IMR-90 (cell line): ENCODE measurements at regions of chr3 and their contacts with region 1.

Region 1: DNA sequence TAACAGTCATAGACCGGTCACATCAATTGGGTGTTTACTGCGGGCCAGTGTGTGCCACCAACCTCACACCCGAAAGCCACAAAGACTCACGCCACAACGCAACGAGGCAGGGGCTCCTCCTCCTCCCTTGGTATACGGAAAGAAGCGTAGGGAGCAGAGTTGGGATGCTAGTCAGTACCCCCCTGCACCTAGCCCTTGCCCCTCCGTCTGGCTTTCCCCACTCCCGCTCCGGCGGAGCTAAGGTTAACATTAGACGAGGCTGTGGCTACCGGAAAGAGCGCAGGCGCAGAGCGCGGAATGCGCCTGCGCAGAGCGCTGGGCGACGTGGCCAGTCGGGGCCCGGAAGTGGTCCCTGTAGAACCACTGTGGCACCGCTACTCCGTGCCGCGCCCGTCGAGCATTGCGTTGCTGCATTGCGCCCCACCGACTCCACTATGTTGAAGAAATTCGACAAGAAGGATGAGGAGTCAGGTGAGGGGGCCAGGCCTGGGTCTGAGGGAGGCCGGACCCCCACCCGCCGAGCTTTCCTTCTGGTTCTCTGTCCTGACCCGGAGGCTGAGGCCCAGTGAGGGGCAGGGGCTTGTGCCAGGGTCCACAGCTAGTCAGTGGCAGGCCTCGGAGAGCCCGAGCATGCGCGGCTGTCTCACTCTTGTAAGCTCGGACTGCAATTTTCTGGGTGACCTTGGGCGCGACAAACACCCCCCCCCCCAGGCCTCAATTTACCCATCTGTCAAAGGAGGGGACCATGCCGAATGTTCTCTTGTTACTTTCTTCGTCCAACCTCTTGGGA is at the start of gene COPG1:
- DNase-seq: peak; percentile 87
- ATAC-seq: peak; percentile 83
- H3K4me3 ChIP-seq: peak within 1 kb of the TSS; percentile 67
- H3K27ac ChIP-seq: peak within 1 kb of the TSS; percentile 96
- H3K4me1 ChIP-seq: peaks cover 16% of the 10 kb centered on the region
- H3K27me3 ChIP-seq: no peaks in the 10 kb centered on the region
- CTCF ChIP-seq: no peak
- POLR2A ChIP-seq: peak; percentile 97
- RAD21 ChIP-seq: no peak
- total RNA-seq, gene COPG1: 440 and 446 TPM in 2 replicates

Region 2: DNA sequence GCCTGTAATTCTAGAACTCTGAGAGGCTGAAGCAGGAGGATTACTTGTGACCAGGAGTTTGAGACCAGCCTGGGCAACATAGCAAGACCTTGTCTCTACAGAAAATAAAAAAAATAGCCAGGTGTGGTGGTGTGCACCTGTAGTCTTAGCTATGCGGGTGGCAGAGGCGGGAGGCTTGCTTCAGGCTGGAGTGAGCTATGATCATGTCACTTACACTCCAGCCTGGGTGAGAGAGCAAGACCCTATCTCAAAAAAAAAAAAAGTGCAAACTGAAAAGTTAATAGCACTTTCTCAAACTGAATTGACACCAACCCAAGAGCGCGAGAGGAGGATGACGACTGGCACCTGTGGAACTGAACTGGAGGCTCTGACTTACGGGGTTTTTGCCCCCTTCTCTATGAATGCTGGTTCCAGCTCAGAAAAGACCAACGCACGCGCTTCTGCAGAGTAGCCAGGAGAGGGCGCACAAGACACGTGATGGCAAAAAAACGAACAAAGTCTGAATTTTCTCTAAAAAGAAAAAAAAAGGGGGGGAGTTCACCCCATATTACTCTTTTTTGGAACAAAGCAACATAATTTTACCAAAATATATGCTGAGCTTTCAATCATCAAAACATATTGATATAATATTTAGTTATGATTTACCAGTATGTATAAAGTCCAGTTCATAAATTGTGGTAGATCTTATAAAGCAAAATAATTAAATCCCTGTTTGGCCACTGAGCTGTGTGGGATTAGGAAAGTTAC is 279.3 kb before region 1 on chr3:
- CTCF ChIA-PET with region 1: interaction called, 10 read pairs
- POLR2A ChIA-PET with region 1: no interaction called
- dilution Hi-C with region 1: no loop called
- in situ Hi-C with region 1: loop called (anchors 5 kb)
- intact Hi-C with region 1: loop called (anchors 1 kb)
- DNase-seq: peak; percentile 37
- ATAC-seq: peak; percentile 72
- H3K4me3 ChIP-seq: no peak overlapping the region
- H3K27ac ChIP-seq: no peak overlapping the region
- H3K4me1 ChIP-seq: peaks cover 2% of the 10 kb centered on the region; the same call in 1 of the 2 replicates
- H3K27me3 ChIP-seq: peaks cover 22% of the 10 kb centered on the region
- CTCF ChIP-seq: peak; percentile 91
- POLR2A ChIP-seq: no peak
- RAD21 ChIP-seq: peak; percentile 88

Region 3: GRCh38 chr3:129058441-129059200 is 190.8 kb before region 1 on chr3:
- CTCF ChIA-PET with region 1: no interaction called
- POLR2A ChIA-PET with region 1: no interaction called
- dilution Hi-C with region 1: no loop called
- in situ Hi-C with region 1: loop called (anchors 10 kb)
- intact Hi-C with region 1: loop called (anchors 5 kb)
- DNase-seq: no peak
- ATAC-seq: peak; percentile 57
- H3K4me3 ChIP-seq: no peak overlapping the region
- H3K27ac ChIP-seq: no peak overlapping the region
- H3K4me1 ChIP-seq: peaks cover 2% of the 10 kb centered on the region; the same call in 1 of the 2 replicates
- H3K27me3 ChIP-seq: peaks cover 28% of the 10 kb centered on the region
- CTCF ChIP-seq: no peak
- POLR2A ChIP-seq: no peak
- RAD21 ChIP-seq: no peak

Region 4: DNA sequence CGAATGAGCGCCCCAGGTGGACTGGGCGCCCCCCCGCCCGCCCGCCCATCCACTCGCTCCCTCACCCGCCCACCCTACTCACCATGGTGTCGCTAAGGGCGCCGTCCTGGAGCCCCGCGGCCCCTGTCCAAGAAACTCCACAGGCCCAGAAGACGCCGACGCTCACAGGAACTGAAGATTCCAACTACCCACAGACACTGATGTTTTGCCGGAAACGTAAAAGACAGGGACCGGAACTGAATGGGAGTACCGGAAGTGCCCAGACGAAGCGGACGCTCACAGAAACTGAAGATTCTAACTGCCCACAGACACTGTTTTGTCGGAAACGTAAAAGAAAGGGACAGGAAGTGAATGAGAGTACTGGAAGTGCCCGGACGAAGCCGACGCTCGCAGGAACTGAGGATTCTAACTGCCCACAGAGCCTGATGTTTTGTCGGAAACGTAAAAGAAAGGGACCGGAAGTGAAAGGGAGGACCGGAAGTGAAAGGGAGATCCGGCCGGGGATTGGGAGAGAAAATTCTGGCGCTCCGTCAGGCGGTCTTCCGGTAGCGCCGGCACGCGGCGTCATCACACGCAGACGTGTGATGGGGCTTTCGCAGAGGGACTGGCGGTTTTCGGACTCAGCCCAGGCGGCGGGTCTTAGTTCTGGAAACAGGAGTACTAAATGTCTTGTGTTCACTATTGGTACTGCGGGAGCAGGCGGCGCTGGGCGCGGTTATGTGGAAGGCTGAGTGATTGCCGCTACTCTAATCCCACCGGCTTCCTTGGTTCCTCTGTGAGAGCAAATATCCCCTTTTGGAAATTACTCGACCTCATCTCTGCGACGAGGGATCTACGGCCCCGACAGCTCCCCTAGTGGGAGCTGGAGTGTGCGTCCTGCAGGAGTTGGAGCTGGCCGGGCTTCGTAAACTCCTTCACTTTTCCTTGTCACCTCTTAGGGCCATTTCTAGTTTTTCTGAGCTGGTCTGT is 88.3 kb before region 1 on chr3 and contains the start of gene ISY1:
- CTCF ChIA-PET with region 1: interaction called, 23 read pairs
- POLR2A ChIA-PET with region 1: no interaction called
- dilution Hi-C with region 1: no loop called
- in situ Hi-C with region 1: no loop called
- intact Hi-C with region 1: loop called (anchors 1 kb)
- DNase-seq: peak; percentile 97
- ATAC-seq: peak; percentile 87
- H3K4me3 ChIP-seq: peak within 1 kb of the TSS; percentile 67
- H3K27ac ChIP-seq: peak within 1 kb of the TSS; percentile 92
- H3K4me1 ChIP-seq: peaks cover 2% of the 10 kb centered on the region
- H3K27me3 ChIP-seq: no peaks in the 10 kb centered on the region
- CTCF ChIP-seq: peak; percentile 87
- POLR2A ChIP-seq: peak; percentile 95
- RAD21 ChIP-seq: peak; percentile 56
- total RNA-seq, gene ISY1: 28.5 and 39.7 TPM in 2 replicates

Region 5: DNA sequence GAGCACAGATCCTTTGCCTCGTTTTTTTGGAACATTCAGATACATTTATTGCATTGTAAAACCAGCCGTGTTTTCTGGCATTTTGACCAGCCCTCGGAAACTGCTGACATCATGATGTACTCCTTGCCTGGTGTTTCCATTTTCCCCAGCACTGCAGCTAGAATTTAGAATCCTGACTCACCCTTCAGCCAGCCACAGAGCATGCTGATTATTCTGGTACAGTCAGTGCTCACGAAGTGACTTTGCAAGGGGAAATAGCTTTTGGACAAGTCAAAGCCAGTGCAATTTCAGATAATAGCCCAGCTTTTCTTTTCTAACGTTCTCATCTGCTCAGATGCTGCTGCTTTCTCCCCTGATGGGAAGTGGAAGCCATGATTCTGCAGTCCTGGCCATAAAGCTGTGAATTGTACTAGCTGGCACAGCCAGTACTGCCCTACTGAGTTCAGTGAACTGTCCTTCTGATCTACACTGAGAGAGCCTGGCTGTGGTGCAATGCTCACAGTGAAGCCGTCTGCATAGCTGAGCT is 53.7 kb before region 1 on chr3:
- CTCF ChIA-PET with region 1: interaction called, 10 read pairs
- POLR2A ChIA-PET with region 1: no interaction called
- dilution Hi-C with region 1: no loop called
- in situ Hi-C with region 1: no loop called
- intact Hi-C with region 1: loop called (anchors 5 kb)
- DNase-seq: peak; percentile 96
- ATAC-seq: peak; percentile 98
- H3K4me3 ChIP-seq: peak overlapping the region; percentile 41
- H3K27ac ChIP-seq: peak overlapping the region; percentile 86
- H3K4me1 ChIP-seq: peaks cover 12% of the 10 kb centered on the region
- H3K27me3 ChIP-seq: no peaks in the 10 kb centered on the region
- CTCF ChIP-seq: no peak
- POLR2A ChIP-seq: peak; percentile 58; the same call in 1 of the 2 replicates
- RAD21 ChIP-seq: no peak